Activated CD4-positive, alpha-beta memory T cell treated with anti-CD3 and anti-CD28 coated beads, Interleukin-2, amount 10 ng/mL, durations not matched to agents 7 days and 5 days (primary cell): ENCODE measurements at regions of chr6 and their contacts with region 1.

Region 1: GRCh38 chr6:25070547-25071366 is 135.0 kb upstream of the RIPOR2 start:
- DNase-seq: peak; percentile 87
- H3K4me3 Mint-ChIP-seq: no peak overlapping the region
- H3K27ac Mint-ChIP-seq: peak overlapping the region; percentile 81
- H3K4me1 Mint-ChIP-seq: peaks cover 8% of the 10 kb centered on the region
- H3K27me3 Mint-ChIP-seq: peaks cover 2% of the 10 kb centered on the region

Region 2: GRCh38 chr6:23980965-23981364 is 1089.8 kb before region 1 on chr6:
- CTCF ChIA-PET with region 1: no interaction called
- POLR2A ChIA-PET with region 1: no interaction called
- DNase-seq: no peak
- H3K4me3 Mint-ChIP-seq: no peak overlapping the region
- H3K27ac Mint-ChIP-seq: no peak overlapping the region
- H3K4me1 Mint-ChIP-seq: no peaks in the 10 kb centered on the region
- H3K27me3 Mint-ChIP-seq: no peaks in the 10 kb centered on the region

Region 3: DNA sequence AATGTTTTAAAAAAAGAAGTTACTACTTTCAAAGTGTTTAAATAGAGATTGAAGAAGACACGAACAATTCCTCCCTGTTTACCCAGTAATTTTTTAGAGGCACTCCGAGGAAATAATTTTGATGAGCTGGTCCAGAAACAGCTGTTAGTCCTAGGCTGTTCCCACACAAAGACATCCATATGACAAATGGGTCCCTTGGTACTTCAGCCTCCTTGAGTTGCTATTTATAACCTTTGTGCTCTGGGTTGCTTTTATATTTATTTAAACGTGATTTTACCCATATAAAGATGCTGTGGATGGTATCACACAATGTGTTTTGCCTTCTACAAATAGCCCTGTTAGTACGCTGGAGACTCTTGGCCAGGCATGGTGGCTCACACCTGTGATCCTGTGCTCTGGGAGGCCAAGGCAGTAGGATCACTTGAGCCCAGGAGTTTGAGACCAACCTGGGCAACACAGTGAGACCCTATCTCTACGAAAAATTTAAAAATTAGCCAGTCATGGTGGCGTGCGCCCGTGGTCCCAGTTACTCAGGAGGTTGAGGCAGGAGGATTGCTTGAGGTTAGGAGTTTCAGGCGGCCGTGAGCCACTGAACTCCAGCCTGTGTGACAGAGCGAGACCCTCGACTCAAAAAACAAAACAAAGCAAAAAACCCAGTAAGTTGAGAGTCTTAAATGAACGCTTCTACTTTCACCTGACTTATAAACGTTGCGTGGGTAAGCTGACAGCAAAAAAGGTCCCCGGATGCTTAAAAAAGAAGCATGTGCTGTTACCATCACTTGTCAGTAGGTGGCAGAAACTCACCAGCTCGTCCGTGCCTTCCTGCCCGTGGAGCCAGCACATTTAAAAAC is 215.1 kb before region 1 on chr6:
- CTCF ChIA-PET with region 1: interaction called, 22 read pairs
- POLR2A ChIA-PET with region 1: interaction called, 3 read pairs
- DNase-seq: peak; percentile 75
- H3K4me3 Mint-ChIP-seq: no peak overlapping the region
- H3K27ac Mint-ChIP-seq: peak overlapping the region; percentile 90
- H3K4me1 Mint-ChIP-seq: peaks cover 55% of the 10 kb centered on the region
- H3K27me3 Mint-ChIP-seq: no peaks in the 10 kb centered on the region

Region 4: GRCh38 chr6:25035527-25036435 is 35.0 kb before region 1 on chr6:
- CTCF ChIA-PET with region 1: interaction called, 40 read pairs
- POLR2A ChIA-PET with region 1: interaction called, 3 read pairs
- DNase-seq: peak; percentile 45
- H3K4me3 Mint-ChIP-seq: peak overlapping the region; percentile 95
- H3K27ac Mint-ChIP-seq: peak overlapping the region; percentile 95
- H3K4me1 Mint-ChIP-seq: peaks cover 69% of the 10 kb centered on the region
- H3K27me3 Mint-ChIP-seq: no peaks in the 10 kb centered on the region

Region 5: GRCh38 chr6:25042036-25042521 is 28.7 kb before region 1 on chr6:
- CTCF ChIA-PET with region 1: interaction called, 40 read pairs
- POLR2A ChIA-PET with region 1: interaction called, 4 read pairs
- DNase-seq: peak; percentile 54
- H3K4me3 Mint-ChIP-seq: peak overlapping the region; percentile 92
- H3K27ac Mint-ChIP-seq: peak overlapping the region; percentile 96
- H3K4me1 Mint-ChIP-seq: peaks cover 56% of the 10 kb centered on the region
- H3K27me3 Mint-ChIP-seq: no peaks in the 10 kb centered on the region

Region 6: GRCh38 chr6:25053875-25054371 is 16.8 kb before region 1 on chr6:
- CTCF ChIA-PET with region 1: interaction called, 25 read pairs
- POLR2A ChIA-PET with region 1: interaction called, 7 read pairs
- DNase-seq: no peak
- H3K4me3 Mint-ChIP-seq: no peak overlapping the region
- H3K27ac Mint-ChIP-seq: peak overlapping the region; percentile 74
- H3K4me1 Mint-ChIP-seq: peaks cover 86% of the 10 kb centered on the region
- H3K27me3 Mint-ChIP-seq: no peaks in the 10 kb centered on the region